ENCODE measurements at regions of chr4 and their contacts with region 1.

Region 1: GRCh38 chr4:152369902-152370295 is 166.0 kb downstream of the FBXW7 start:
- DNase-seq: no peak
- ATAC-seq: no peak
- H3K4me3 ChIP-seq: no peak overlapping the region
- H3K27ac ChIP-seq: no peak overlapping the region
- H3K4me1 ChIP-seq: no peaks in the 10 kb centered on the region
- H3K27me3 ChIP-seq: no peaks in the 10 kb centered on the region
- CTCF ChIP-seq: peak; percentile 7 to 49 (median 22); a peak in 2 of 6 replicates
- POLR2A ChIP-seq: no peak
- RAD21 ChIP-seq: peak; percentile 54

Region 2: DNA sequence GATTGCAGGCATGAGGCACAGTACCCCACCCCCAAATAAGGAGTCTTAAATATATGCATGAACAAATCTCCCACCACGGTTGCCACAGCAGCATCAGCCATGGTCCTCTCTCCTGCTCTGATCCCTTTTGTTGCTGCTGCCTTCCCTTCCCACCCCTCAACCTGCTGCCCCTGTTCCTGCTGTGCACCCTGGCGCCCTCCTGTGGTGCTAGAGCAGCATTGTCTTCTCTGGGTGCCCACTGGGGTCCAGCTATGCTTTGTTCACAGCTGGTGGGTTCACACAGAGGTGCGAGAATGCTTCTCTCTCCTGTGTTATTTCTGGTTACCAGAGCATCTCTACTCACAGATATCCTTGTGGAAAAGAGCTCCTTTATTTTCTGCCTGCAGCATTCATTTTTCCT is 725.3 kb before region 1 on chr4:
- CTCF ChIA-PET with region 1: no interaction called
- POLR2A ChIA-PET with region 1: no interaction called
- RAD21 ChIA-PET with region 1: no interaction called
- intact Hi-C with region 1: loop called (anchors 10 kb)
- DNase-seq: peak; percentile 10
- ATAC-seq: peak; percentile 94
- H3K4me3 ChIP-seq: no peak overlapping the region
- H3K27ac ChIP-seq: no peak overlapping the region
- H3K4me1 ChIP-seq: peaks cover 0 to 4% of the 10 kb centered on the region in 2 experiments; a peak in 1 of 4 replicates
- H3K27me3 ChIP-seq: no peaks in the 10 kb centered on the region
- CTCF ChIP-seq: peak; percentile 47 to 88 (median 88); a peak in 5 of 6 replicates
- POLR2A ChIP-seq: no peak
- RAD21 ChIP-seq: peak; percentile 63

Region 3: DNA sequence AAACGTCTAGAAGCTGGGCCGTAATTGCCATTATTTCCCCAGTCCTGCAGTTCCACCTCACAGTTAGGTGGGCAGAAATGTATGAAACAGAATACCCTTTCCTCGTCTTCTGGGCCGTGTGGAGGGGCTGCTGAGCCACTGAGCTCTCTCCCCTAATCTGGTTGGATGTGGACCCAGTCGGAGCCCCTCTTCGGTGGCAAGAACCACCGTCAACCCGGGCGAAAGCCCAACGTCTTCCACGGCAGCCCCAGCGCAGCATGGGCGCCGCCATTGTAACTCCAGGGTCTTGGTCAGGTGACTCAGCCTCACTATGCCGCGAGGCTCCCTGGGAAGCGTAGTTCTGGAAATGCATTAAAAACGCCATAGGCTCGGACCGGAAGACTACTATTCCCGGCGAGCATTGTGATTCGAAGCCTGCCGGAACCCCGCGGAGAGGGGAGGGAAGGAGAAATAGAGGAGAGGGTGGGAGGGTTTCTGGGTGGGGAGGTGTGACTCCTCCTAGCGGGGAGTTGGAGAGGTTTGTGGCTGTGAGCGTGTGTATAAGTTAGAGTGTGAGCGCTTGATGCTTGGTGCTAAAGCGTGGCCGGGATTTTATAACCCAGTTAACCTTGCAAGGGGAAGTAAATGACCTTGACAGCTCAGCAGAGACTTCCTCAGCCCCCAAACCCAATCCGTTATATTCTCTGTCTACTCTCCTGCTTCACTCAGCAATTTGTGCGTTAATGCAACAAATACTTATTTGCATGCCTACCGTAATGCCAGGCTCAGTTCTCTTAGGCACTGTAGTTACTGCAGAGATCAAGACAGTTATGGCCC is 609.0 kb before region 1 on chr4 and contains the start of gene GATB:
- CTCF ChIA-PET with region 1: no interaction called
- POLR2A ChIA-PET with region 1: no interaction called
- RAD21 ChIA-PET with region 1: no interaction called
- intact Hi-C with region 1: loop called (anchors 10 kb)
- DNase-seq: peak; percentile 96
- ATAC-seq: peak; percentile 98
- H3K4me3 ChIP-seq: peak within 1 kb of the TSS; percentile 87 to 96
- H3K27ac ChIP-seq: peak within 1 kb of the TSS; percentile 48
- H3K4me1 ChIP-seq: peaks cover 7 to 13% of the 10 kb centered on the region in 2 experiments; a peak in 3 of 4 replicates
- H3K27me3 ChIP-seq: no peaks in the 10 kb centered on the region
- CTCF ChIP-seq: peak in 2 of 3 experiments; percentile 38 to 53; a peak in 3 of 6 replicates
- POLR2A ChIP-seq: peak; percentile 51
- RAD21 ChIP-seq: 0 out of 2 replicates have a peak, but pooled peaks have one; percentile 29
- total RNA-seq, gene GATB: 29.3 TPM

Region 4: GRCh38 chr4:152106113-152106763 is 263.7 kb before region 1 on chr4:
- CTCF ChIA-PET with region 1: no interaction called
- POLR2A ChIA-PET with region 1: no interaction called
- RAD21 ChIA-PET with region 1: no interaction called
- intact Hi-C with region 1: loop called (anchors 10 kb)
- DNase-seq: peak; percentile 83
- ATAC-seq: peak; percentile 89
- H3K4me3 ChIP-seq: peak overlapping the region in 1 of 2 experiments; percentile 14; a peak in 2 of 4 replicates
- H3K27ac ChIP-seq: peak overlapping the region; percentile 47
- H3K4me1 ChIP-seq: peaks cover 19 to 45% of the 10 kb centered on the region in 2 experiments
- H3K27me3 ChIP-seq: no peaks in the 10 kb centered on the region
- CTCF ChIP-seq: no peak
- POLR2A ChIP-seq: no peak
- RAD21 ChIP-seq: no peak

Measured in HCT116 (cell line).